ENCODE measurements at regions of chr19 and their contacts with region 1.

Region 1: DNA sequence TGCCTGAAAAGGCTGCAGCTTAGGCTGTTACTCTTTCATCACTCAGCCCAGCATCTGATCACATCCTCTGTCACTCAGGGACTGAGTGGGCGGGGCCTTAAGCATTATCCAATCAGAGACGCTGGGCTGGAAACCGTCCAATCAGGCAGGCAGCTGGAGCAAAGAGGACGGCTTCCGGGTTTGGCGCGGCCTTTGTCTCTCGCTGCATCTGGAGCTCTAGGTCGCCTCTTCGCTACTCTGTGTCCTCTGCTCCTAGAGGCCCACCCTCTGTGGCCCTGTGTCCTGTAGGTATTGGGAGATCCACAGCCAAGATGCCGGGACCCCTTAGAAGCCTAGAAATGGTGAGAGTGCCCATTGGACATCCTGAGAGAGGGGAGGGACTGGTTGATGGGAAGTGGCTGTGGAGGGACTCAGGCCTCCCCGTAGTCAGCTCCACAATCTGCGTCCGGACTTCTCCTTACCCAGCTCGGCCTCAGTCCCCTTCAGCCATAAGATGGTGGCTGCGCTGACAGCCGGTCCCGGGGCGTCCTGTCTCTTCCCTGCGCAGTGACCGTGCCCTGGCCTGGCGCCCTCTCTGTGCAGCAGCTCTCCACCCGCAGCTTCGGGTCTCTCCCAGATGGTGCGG is at the start of gene ZNF486:
- DNase-seq: peak; percentile 97
- ATAC-seq: peak; percentile 98
- total RNA-seq, gene ZNF486: 1.5 TPM

Region 2: GRCh38 chr19:20077791-20078463 is 89.2 kb before region 1 on chr19 and contains the start of gene ZNF90:
- intact Hi-C with region 1: loop called (anchors 5 kb)
- DNase-seq: peak; percentile 94
- ATAC-seq: peak; percentile 98
- total RNA-seq, gene ZNF90: 1.1 TPM

Region 3: DNA sequence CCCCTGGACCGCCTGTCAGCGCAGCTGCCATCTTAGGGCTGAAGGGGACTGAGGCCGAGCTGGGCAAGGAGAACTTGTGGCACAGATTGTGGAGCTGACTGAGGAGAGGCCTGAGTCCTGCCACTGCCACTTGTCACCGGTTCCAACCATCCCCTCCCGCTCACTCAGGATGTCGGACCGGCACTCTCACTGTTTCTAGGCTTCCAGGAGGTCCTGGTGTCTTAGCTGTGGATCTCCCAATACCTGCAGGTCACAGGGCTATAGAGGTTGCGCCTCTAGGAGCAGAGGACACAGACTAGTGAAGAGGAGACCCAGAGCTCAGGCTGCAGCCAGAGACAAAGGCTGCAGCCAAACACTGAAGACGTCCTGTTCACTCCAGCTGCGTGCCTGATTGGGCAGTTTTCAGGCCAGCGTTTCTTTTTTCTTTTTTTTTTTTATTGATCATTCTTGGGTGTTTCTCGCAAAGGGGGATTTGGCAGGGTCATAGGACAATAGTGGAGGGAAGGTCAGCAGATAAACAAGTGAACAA is 15.5 kb before region 1 on chr19:
- intact Hi-C with region 1: no loop called
- DNase-seq: no peak
- ATAC-seq: no peak

Region 4: DNA sequence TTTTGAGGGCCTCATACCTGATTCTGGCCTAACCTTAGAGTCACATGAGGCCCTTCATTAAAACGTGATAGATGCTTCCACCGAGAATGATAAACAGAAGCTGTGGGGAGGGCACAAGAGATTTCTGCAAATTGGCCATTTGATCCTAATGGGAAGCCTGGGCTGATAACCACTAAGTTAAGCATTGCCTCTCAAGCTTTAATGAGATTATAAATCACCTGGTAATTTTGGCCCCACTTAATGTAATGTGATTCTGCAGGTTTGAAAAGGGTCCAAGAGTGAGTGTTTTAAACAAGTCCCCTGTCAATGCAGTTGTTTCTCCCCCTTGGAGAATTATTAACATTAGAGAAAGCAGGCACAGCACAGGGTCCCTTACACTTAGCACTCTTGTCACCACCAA is 41.9 kb after region 1 on chr19:
- intact Hi-C with region 1: no loop called
- DNase-seq: no peak
- ATAC-seq: no peak

Region 5: DNA sequence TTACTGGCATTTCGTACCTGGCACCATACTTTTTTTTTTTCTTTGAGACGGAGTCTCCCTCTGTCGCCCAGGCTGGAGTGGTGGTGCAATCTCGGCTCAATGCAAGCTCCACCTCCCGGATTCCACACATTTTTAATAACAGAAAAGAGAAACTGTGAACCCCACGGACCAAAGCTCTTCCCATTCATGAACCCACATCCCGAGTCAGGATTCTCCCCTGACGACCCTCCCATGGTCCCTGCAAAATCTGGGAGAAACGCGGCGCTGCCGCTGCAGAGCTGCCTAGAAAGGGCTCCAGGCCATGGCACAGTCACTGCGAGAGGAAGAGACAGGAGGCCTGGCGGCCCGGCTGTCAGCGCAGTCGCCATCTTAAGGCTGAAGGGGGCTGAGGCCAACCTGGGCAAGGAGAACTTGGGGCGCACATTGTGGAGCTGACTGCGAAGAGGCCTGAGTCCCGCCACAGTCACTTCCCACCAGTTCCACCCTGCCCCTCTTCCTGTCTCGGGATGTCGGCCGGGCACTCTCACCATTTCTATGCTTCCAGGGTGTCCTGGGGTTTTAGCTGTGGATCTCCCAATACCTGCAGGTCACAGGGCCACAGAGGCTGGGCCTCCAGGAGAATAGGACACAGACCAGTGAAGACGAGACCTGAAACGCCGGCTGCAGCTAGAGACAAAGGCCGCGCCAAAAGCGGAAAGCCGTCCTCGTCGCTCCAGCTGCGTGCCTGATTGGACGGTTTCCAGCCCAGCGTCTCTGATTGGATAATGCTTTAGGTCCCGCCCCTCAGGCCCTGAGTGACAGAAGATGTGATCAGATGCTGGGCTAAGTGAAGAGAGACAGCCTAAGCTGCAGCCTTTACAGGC is 70.9 kb after region 1 on chr19:
- intact Hi-C with region 1: loop called (anchors 1 kb)
- DNase-seq: peak; percentile 93
- ATAC-seq: peak; percentile 95